AG04450 (cell line): ENCODE measurements at regions of chr10 and their contacts with region 1.

Region 1: DNA sequence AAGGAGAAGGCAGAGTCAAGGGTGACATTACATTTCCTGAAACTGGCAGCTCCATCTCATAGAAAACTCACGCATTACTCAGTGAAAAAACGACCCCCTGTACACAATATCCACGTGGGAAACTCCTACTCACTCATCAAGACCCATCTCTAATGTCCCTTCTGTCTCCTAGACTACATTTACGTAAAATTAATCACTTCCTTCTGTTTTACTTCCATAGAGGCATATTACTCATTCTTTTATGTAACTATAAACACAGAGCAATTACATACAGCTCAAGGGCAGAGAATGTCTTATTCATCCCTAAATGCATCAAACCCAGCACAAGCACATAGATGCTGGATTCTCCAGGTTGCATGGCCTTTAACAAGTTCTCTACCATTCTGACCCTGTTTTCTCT is 281.8 kb downstream of the KCNMA1 start:
- DNase-seq: peak; percentile 64
- H3K4me3 ChIP-seq: no peak overlapping the region
- H3K27ac ChIP-seq: peak overlapping the region; percentile 43
- H3K27me3 ChIP-seq: no peaks in the 10 kb centered on the region
- CTCF ChIP-seq: no peak

Region 2: DNA sequence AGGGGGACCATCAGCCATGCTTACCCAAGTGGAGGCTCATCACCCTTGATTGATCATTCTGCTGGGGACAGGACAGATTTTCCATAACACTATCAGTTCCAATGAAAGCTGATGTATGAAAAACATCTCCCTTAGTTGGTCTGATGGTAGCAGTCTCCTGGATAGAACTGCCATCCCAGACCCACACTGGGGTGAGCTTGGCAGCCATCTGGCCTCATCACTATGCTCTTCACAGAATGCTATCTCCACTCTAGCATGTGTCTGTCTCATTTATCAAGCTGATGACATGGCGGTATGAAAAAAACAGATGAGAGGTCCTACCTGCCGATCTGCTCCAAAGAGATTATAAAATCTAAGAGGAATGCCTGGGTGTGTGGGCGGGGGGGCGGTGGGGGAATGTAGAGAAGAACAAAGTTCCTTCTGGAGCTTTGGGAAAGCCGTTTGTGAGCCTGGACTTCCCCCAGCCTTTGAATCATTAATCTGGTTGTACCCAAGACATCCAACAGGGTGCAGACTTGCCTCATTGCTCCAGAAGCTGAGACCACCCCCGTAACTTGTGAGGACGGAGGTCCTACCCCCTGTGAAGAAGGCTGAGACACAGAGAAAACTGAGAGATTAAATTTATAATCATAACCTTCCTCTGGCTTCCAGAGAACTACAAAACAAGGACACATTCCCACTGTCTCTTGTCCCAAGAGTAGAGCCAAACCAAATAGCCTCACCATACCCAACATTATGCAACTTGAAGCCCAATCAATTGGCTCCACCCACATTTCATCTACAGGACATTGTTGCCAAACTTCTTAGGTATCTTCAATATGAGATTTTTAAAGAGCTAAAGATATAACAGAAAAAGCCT is 59.1 kb before region 1 on chr10:
- CTCF ChIA-PET with region 1: interaction called, 15 read pairs
- POLR2A ChIA-PET with region 1: no interaction called
- DNase-seq: no peak
- H3K4me3 ChIP-seq: no peak overlapping the region
- H3K27ac ChIP-seq: no peak overlapping the region
- H3K27me3 ChIP-seq: no peaks in the 10 kb centered on the region
- CTCF ChIP-seq: peak; percentile 8; the same call in 1 of the 2 replicates